ENCODE measurements at regions of chr6 and their contacts with region 1.

Region 1: DNA sequence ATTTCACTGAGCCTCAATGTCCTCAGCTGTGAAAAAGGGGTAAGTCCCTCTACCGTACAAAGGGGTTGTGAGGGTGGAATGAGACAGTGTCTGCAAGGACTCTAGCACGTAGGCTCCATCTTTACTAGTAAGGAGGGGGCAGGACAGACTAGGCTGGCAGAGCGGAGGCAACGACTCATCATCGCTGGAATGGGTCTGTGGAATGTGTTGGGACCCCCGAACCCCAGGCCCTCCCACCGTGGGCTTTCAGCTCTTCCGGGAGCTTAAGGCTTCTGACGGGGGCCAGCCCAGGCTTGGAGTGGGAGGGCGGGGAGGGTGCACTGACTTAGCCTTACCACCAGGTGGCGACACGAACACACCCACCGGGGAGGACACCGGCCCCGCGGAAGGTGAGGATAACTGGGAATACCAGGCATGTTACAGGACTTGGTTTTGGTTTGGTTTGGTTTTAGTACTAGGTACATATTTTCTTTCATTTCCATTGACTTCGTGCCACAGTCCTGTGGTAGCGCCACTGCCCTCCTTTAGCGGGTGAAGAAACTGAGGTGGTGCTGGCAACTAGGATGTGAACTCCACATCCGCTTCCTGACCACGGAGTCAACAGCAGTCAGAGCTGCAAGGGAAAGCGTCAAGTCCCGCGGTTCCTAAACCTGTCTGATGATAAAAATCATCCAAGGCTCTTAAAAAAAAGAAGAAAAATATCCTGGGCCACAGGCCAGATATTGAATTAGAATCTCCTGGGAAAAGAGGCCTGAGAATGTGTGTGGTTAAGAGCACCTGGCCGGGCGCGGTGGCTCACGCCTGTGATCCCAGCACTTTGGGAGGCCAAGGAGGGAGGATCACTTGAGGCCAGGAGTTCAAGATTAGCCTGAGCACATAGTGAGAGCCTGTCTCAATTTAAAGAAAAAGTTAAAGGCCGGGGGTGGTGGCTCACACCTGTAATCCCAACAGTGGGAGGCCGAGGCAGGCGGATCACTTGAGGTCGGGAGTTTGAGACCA is 10.3 kb upstream of the TULP1 start:
- DNase-seq: peak; percentile 51
- ATAC-seq: peak; percentile 95
- H3K4me3 ChIP-seq: peak overlapping the region in 1 of 2 experiments; percentile 20; a peak in 1 of 4 replicates
- H3K27ac ChIP-seq: no peak overlapping the region
- H3K4me1 ChIP-seq: no peaks in the 10 kb centered on the region
- H3K27me3 ChIP-seq: no peaks in the 10 kb centered on the region
- CTCF ChIP-seq: peak; percentile 97

Region 2: DNA sequence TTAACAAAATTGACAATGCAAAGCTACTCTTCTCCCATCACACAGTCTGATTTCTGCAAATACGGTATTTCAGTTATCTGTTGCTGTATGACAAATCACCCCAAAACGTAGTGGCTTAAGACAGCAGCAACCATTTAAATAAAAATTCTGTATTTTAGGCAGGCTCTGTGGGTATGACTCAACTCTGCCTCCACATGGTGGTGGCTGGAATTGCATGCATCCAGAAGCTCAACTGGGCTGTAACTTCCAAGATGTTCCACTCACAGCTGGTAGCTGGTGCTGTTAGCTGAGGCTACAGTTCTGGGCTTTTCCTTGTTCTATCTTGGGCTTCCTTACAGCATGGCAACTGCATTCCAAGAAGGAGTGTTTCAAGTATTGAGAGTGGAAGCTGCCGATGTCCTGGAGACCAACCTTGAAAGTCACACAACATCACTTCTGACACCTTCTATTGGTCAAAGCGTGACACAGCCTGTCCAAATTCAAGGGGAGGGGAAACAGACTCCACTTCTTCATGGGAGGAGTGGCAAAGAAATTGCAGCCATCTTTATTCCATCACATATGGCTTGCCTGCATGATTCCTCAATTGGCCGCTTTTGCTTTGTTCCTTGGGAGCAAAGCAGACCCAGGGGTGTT is 29.4 kb after region 1 on chr6:
- CTCF ChIA-PET with region 1: interaction called, 14 read pairs
- POLR2A ChIA-PET with region 1: interaction called, 3 read pairs
- in situ Hi-C with region 1: no loop called
- intact Hi-C with region 1: no loop called
- DNase-seq: peak; percentile 32
- ATAC-seq: no peak
- H3K4me3 ChIP-seq: no peak overlapping the region
- H3K27ac ChIP-seq: no peak overlapping the region
- H3K4me1 ChIP-seq: no peaks in the 10 kb centered on the region
- H3K27me3 ChIP-seq: no peaks in the 10 kb centered on the region
- CTCF ChIP-seq: peak; percentile 94

Measured in Panc1 (cell line).